ENCODE measurements at regions of chr6 and their contacts with region 1.

Region 1: DNA sequence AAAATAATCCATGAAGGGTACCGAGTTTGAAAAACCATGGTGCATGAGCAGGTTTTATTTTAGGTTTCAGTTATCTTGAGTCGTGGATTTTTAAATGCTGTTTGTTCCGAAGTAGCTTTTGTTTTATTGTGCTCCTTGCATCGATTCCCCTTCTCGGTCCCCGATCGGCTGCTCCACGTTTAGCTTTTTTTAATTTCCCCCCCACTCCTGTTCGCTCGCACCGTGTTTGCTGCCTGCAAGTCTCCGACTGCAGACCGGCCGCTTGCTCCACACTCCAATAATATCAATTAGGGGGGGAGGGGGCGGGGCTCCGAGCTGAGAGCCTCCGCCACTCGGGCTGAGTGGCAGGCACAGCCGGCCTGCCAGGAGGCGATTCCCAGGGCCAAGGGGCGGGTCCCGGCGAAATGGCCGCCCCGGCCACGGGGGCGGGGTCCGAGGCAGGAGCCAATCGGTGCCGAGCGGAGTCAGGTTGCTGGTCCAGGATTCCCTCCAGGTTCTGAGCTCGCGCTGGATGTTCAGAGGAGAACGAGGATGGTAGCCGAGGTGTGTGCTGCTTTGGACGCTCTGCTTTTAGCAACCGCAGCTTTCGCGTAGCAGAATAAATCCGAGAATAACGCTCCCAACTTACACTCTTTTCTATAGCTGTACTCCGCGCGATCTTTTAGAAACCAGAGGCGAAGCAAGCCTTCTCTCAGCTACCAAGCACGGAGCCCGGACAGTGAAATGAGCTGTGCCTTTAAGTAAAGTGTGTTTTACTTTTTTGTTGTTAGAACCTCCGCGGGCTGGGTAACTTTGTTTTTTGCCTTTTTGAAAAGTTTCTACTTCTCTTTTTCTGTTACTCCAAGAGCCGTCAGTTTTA is at the start of gene EPHA7:
- H3K4me3 ChIP-seq: peak within 1 kb of the TSS; percentile 75
- H3K27ac ChIP-seq: peak within 1 kb of the TSS; percentile 97
- H3K4me1 ChIP-seq: peaks cover 7% of the 10 kb centered on the region; the same call in 1 of the 2 replicates
- CTCF ChIP-seq: no peak

Region 2: GRCh38 chr6:93088621-93089501 is 330.7 kb before region 1 on chr6:
- CTCF ChIA-PET with region 1: no interaction called
- POLR2A ChIA-PET with region 1: interaction called, 29 read pairs
- H3K4me3 ChIP-seq: peak overlapping the region; percentile 22
- H3K27ac ChIP-seq: peak overlapping the region; percentile 83
- H3K4me1 ChIP-seq: peaks cover 12% of the 10 kb centered on the region
- CTCF ChIP-seq: no peak

Region 3: GRCh38 chr6:93307505-93308409 is 111.8 kb before region 1 on chr6:
- CTCF ChIA-PET with region 1: no interaction called
- POLR2A ChIA-PET with region 1: interaction called, 10 read pairs
- H3K4me3 ChIP-seq: no peak overlapping the region
- H3K27ac ChIP-seq: no peak overlapping the region
- H3K4me1 ChIP-seq: peaks cover 6% of the 10 kb centered on the region; the same call in 1 of the 2 replicates
- CTCF ChIP-seq: no peak

Region 4: DNA sequence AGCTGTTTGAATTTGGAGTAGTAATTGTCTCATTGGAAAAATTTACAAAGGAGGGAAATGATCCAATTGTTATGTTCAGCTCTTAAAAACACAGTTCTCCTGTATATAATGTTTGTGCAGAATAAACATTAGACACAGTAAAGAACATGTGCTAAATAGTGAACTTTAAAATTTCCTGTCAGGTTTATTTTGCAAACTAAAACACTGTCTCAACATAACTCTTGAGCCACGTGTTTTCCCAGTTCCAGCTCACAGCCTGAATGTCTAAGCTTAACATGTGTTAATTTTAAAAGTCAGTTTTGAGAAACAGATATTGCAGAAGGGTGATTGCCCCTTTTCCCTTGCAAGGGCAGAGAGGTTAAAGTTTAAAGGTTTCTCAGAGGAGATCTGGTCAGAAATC is 20.8 kb before region 1 on chr6:
- CTCF ChIA-PET with region 1: interaction called, 7 read pairs
- POLR2A ChIA-PET with region 1: interaction called, 125 read pairs
- H3K4me3 ChIP-seq: no peak overlapping the region
- H3K27ac ChIP-seq: no peak overlapping the region
- H3K4me1 ChIP-seq: peaks cover 40% of the 10 kb centered on the region
- CTCF ChIP-seq: no peak

Region 5: DNA sequence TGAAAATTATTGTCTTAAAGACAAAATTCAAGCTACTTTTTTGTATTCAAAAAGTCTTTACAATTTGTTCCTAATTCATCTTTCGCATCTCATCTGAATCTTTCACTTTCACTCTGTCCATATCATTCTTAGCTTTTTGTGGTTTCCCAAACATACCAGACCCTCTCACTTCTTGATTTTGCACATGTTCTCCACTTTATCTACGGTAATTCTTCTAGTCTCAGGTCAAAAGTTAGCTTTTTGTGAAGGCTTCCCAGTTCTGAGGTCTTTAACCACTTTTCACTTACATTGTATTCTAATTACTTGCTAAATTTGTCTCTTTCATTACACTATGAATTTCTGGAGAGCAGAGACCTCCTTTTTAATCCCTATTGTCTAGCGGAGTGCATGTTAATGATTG is 34.4 kb after region 1 on chr6:
- CTCF ChIA-PET with region 1: interaction called, 17 read pairs
- POLR2A ChIA-PET with region 1: interaction called, 4 read pairs
- H3K4me3 ChIP-seq: no peak overlapping the region
- H3K27ac ChIP-seq: no peak overlapping the region
- H3K4me1 ChIP-seq: no peaks in the 10 kb centered on the region
- CTCF ChIP-seq: no peak

Measured in HEK293 (cell line).